GM23248 (cell line): ENCODE measurements at regions of chr1 and their contacts with region 1.

Region 1: GRCh38 chr1:209207701-209208286 is 375.7 kb upstream of the CAMK1G start:
- DNase-seq: peak; percentile 88
- H3K4me3 ChIP-seq: peak overlapping the region; percentile 70
- H3K27ac ChIP-seq: no peak overlapping the region
- H3K4me1 ChIP-seq: peaks cover 7% of the 10 kb centered on the region; the same call in 1 of the 2 replicates
- H3K27me3 ChIP-seq: peaks cover 44% of the 10 kb centered on the region

Region 2: GRCh38 chr1:209086486-209087192 is 121.2 kb before region 1 on chr1:
- in situ Hi-C with region 1: no loop called
- DNase-seq: no peak
- H3K4me3 ChIP-seq: no peak overlapping the region
- H3K27ac ChIP-seq: no peak overlapping the region
- H3K4me1 ChIP-seq: no peaks in the 10 kb centered on the region
- H3K27me3 ChIP-seq: no peaks in the 10 kb centered on the region

Region 3: DNA sequence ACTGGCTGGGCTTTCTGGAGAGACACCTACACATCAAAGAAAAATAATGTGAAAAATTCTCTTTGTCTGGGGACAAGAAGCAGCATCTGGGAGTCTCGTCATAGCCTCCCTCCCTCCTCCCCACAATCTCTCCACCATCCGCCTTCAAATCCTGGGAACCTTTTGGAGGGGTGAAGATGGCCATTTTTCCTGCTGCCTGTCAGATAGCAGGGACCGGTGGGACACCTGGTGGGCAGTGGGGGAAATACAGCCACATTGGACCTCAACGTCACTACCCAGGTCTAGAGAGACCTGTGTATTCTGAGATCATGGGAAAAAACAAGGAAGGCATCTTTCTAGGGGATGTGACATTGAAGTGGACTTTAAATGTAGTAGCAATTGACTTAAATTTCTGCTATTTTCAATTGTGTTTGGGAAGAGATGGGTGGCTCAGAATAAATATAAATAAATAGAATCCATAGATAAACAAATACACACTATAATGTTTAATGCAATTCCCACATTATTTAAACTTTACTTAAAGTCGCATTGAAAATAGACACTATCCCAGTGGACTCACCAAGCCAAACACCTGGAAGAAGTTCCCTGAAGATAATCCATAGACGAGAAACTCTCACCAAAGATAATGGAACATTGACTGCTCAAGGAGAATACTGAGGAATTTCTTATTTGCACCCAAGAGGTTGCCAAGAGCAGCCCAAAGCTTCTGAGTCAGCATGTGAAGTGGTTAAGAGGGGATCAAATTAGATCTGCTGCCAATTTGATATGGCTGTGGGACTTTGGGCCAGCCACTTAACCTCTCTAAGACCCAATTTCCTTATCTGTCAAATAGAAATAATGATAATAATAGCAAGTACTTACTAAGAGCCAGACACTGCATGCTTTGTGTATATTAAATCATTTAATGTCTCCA is 228.1 kb after region 1 on chr1:
- in situ Hi-C with region 1: loop called (anchors 25 kb)
- DNase-seq: peak; percentile 75
- H3K4me3 ChIP-seq: no peak overlapping the region
- H3K27ac ChIP-seq: no peak overlapping the region
- H3K4me1 ChIP-seq: peaks cover 12% of the 10 kb centered on the region
- H3K27me3 ChIP-seq: no peaks in the 10 kb centered on the region